H1 (cell line): ENCODE measurements at regions of chr14 and their contacts with region 1.

Region 1: GRCh38 chr14:57962325-57963035 is 96.6 kb upstream of the SLC35F4 start:
- DNase-seq: peak; percentile 66 to 72
- H3K4me3 ChIP-seq: no peak overlapping the region
- H3K27ac ChIP-seq: no peak overlapping the region
- H3K4me1 ChIP-seq: peaks cover 0 to 6% (median 2%) of the 10 kb centered on the region in 4 experiments; a peak in 3 of 7 replicates
- H3K27me3 ChIP-seq: no peaks in the 10 kb centered on the region
- CTCF ChIP-seq: peak; percentile 37 to 78 (median 76)
- EP300 ChIP-seq: no peak
- POLR2A ChIP-seq: no peak
- RAD21 ChIP-seq: peak; percentile 90 to 91

Region 2: GRCh38 chr14:57533214-57533613 is 429.3 kb before region 1 on chr14:
- CTCF ChIA-PET with region 1: interaction called, 13 read pairs
- POLR2A ChIA-PET with region 1: no interaction called
- DNase-seq: no peak
- H3K4me3 ChIP-seq: no peak overlapping the region
- H3K27ac ChIP-seq: no peak overlapping the region
- H3K4me1 ChIP-seq: no peaks in the 10 kb centered on the region
- H3K27me3 ChIP-seq: peaks cover 0 to 1% (median 0%) of the 10 kb centered on the region in 4 experiments; a peak in 2 of 7 replicates
- CTCF ChIP-seq: peak in 2 of 3 experiments; percentile 56 to 64; a peak in 3 of 4 replicates
- EP300 ChIP-seq: no peak
- POLR2A ChIP-seq: no peak
- RAD21 ChIP-seq: peak; percentile 84 to 85